CD8-positive, alpha-beta T cell (primary cell): ENCODE measurements at regions of chr3 and their contacts with region 1.

Region 1: GRCh38 chr3:57397175-57398026 is 104.9 kb upstream of the ASB14 start:
- DNase-seq: peak; percentile 16 to 76 (median 53)
- ATAC-seq: peak; percentile 98
- H3K4me3 ChIP-seq: peak overlapping the region in 1 of 2 experiments; percentile 6
- H3K4me3 Mint-ChIP-seq: peak overlapping the region; percentile 50
- H3K27ac ChIP-seq: no peak overlapping the region
- H3K27ac Mint-ChIP-seq: peak overlapping the region; percentile 38
- H3K4me1 ChIP-seq: peaks cover 8% of the 10 kb centered on the region
- H3K4me1 Mint-ChIP-seq: peaks cover 15% of the 10 kb centered on the region
- H3K27me3 ChIP-seq: no peaks in the 10 kb centered on the region
- H3K27me3 Mint-ChIP-seq: peaks cover 3% of the 10 kb centered on the region
- CTCF ChIP-seq: peak; percentile 87

Region 2: GRCh38 chr3:57409456-57409855 is 12.1 kb after region 1 on chr3:
- CTCF ChIA-PET with region 1: interaction called, 12 read pairs
- POLR2A ChIA-PET with region 1: no interaction called
- intact Hi-C with region 1: no loop called
- DNase-seq: no peak
- ATAC-seq: no peak
- H3K4me3 ChIP-seq: no peak overlapping the region
- H3K4me3 Mint-ChIP-seq: no peak overlapping the region
- H3K27ac ChIP-seq: no peak overlapping the region
- H3K27ac Mint-ChIP-seq: no peak overlapping the region
- H3K4me1 ChIP-seq: no peaks in the 10 kb centered on the region
- H3K4me1 Mint-ChIP-seq: no peaks in the 10 kb centered on the region
- H3K27me3 ChIP-seq: no peaks in the 10 kb centered on the region
- H3K27me3 Mint-ChIP-seq: no peaks in the 10 kb centered on the region
- CTCF ChIP-seq: no peak

Region 3: DNA sequence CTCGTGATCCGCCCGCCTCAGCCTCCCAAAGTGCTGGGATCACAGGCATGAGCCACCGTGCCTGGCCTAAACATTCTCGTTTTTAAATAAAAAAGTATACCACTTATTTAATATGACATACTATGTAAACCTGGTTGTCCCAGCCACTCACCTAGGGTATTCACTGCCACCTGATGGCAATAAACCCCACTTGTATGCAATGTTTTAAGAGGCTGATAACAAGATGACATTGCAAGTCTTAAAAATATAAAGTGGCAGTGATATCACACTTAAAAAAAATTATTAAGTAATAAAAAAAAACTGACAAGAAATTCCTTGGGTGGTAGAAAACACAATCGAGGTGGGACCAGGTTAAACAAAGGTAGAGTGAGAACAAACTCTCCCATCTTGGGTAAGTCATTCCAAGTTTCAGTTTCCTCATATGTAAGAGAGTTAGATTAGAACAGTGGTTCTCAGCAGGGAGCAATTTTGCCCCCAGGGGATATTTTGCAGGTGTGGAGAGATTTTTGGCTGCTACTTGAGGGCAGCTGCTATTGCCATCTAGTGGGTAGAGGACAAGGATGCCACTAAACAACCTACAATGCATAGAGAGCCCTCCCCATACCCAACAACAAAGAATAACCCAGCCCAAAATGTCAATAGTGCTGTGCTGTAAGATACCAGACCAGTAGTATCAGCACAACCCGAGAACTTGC is 185.2 kb after region 1 on chr3:
- CTCF ChIA-PET with region 1: no interaction called
- POLR2A ChIA-PET with region 1: no interaction called
- intact Hi-C with region 1: loop called in 1 of 2 experiments (anchors 10 kb)
- DNase-seq: peak in 2 of 9 experiments; percentile 24 to 34
- ATAC-seq: peak; percentile 62
- H3K4me3 ChIP-seq: no peak overlapping the region
- H3K4me3 Mint-ChIP-seq: no peak overlapping the region
- H3K27ac ChIP-seq: no peak overlapping the region
- H3K27ac Mint-ChIP-seq: no peak overlapping the region
- H3K4me1 ChIP-seq: no peaks in the 10 kb centered on the region
- H3K4me1 Mint-ChIP-seq: peaks cover 28% of the 10 kb centered on the region
- H3K27me3 ChIP-seq: no peaks in the 10 kb centered on the region
- H3K27me3 Mint-ChIP-seq: no peaks in the 10 kb centered on the region
- CTCF ChIP-seq: no peak

Region 4: DNA sequence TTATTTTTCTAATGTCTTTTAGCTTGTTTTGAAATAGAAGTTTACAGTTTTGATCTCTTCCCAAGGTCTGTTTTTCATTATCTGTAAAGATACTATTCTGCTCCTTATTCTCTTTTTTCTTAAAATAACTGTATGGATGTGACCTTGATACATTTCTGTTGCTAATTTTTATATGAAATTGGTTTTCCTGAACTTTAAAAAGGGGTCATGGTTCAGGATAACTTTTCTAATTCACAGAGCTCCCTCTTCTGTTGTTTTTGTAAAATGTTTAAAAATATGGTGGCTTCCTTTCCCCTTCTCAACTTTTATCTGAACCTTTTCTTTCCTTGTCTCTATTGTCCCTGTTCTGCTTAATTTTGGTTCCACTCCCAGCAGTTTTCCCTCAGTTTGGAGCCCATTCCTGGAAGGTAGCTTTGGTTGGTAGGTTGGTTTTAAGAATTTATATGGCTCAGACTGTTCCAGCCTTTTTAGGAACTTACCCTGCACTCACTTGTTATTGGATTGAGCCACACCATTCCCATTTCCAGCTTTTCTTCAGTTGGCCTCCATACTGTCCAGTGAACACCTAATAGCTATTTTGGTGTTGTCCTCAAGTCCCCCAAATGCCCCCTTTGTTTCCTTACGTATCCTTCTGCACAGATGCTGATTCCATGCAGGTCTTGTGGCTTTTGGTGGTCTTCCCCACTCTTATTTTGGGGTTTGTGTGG is 429.0 kb after region 1 on chr3:
- CTCF ChIA-PET with region 1: interaction called, 10 read pairs
- POLR2A ChIA-PET with region 1: no interaction called
- intact Hi-C with region 1: loop called in 1 of 2 experiments (anchors 2 kb)
- DNase-seq: no peak
- ATAC-seq: no peak
- H3K4me3 ChIP-seq: no peak overlapping the region
- H3K4me3 Mint-ChIP-seq: no peak overlapping the region
- H3K27ac ChIP-seq: no peak overlapping the region
- H3K27ac Mint-ChIP-seq: no peak overlapping the region
- H3K4me1 ChIP-seq: no peaks in the 10 kb centered on the region
- H3K4me1 Mint-ChIP-seq: peaks cover 24% of the 10 kb centered on the region
- H3K27me3 ChIP-seq: no peaks in the 10 kb centered on the region
- H3K27me3 Mint-ChIP-seq: no peaks in the 10 kb centered on the region
- CTCF ChIP-seq: no peak

Region 5: GRCh38 chr3:57910988-57911387 is 513.6 kb after region 1 on chr3:
- CTCF ChIA-PET with region 1: interaction called, 8 read pairs
- POLR2A ChIA-PET with region 1: no interaction called
- intact Hi-C with region 1: loop called (anchors 1 to 2 kb)
- DNase-seq: peak in 6 of 9 experiments; percentile 3 to 53 (median 26)
- ATAC-seq: no peak
- H3K4me3 ChIP-seq: no peak overlapping the region
- H3K4me3 Mint-ChIP-seq: no peak overlapping the region
- H3K27ac ChIP-seq: no peak overlapping the region
- H3K27ac Mint-ChIP-seq: no peak overlapping the region
- H3K4me1 ChIP-seq: no peaks in the 10 kb centered on the region
- H3K4me1 Mint-ChIP-seq: no peaks in the 10 kb centered on the region
- H3K27me3 ChIP-seq: no peaks in the 10 kb centered on the region
- H3K27me3 Mint-ChIP-seq: no peaks in the 10 kb centered on the region
- CTCF ChIP-seq: no peak

Region 6: GRCh38 chr3:58206406-58207011 is 809.1 kb after region 1 on chr3:
- CTCF ChIA-PET with region 1: no interaction called
- POLR2A ChIA-PET with region 1: no interaction called
- intact Hi-C with region 1: no loop called
- DNase-seq: peak in 2 of 9 experiments; percentile 12 to 31
- ATAC-seq: peak; percentile 58
- H3K4me3 ChIP-seq: no peak overlapping the region
- H3K4me3 Mint-ChIP-seq: no peak overlapping the region
- H3K27ac ChIP-seq: no peak overlapping the region
- H3K27ac Mint-ChIP-seq: no peak overlapping the region
- H3K4me1 ChIP-seq: no peaks in the 10 kb centered on the region
- H3K4me1 Mint-ChIP-seq: no peaks in the 10 kb centered on the region
- H3K27me3 ChIP-seq: no peaks in the 10 kb centered on the region
- H3K27me3 Mint-ChIP-seq: peaks cover 14% of the 10 kb centered on the region
- CTCF ChIP-seq: no peak

Region 7: DNA sequence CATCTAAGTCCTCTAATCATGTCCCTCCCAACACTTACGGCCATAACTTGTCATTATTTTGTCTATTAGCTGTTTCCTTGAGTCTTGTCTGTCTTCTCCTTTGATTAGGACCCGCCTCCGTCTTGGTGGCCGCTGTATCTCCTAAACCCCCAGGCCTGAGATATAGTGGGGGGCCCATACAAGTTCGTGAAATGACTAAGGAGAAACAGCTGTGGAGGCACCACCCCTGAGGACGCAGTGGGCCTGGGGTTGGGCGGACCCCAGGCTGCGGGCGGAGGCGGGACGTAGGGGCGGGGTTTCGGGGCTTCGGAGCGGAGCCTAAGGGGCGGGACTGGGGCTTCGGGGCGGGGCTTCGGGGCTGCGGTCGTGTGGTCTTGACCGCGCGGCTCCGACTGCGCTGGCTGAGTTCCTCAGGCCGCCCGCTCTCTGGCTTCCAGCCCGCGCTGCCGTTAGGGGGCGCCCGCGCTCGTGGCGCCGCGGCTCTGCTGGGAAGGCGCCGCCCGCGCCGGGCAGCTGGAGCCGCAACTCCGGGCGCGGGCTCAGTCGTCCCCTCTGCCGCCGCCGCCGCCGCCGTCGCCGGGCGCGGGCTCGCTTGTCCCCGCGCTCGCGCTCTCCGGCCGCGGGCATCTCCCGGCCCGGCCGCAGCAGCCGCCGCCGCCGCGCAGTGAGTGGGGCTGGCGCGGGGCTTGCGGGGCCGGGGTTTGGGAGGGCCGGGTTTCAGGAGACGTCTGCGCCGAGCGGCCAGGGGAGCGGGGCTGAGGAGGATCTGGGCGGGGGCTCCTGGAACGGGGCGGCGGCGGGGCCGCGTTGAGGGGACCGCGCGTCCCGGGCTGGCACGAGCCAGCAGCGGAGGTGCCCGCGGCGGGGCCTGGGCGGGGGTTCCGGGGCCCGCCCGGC is 1094.4 kb after region 1 on chr3 and contains the start of gene KCTD6:
- CTCF ChIA-PET with region 1: no interaction called
- POLR2A ChIA-PET with region 1: no interaction called
- intact Hi-C with region 1: no loop called
- DNase-seq: peak; percentile 74 to 93 (median 85)
- ATAC-seq: peak; percentile 81
- H3K4me3 ChIP-seq: peak within 1 kb of the TSS; percentile 72 to 88
- H3K4me3 Mint-ChIP-seq: peak within 1 kb of the TSS; percentile 93
- H3K27ac ChIP-seq: peak within 1 kb of the TSS; percentile 50 to 54
- H3K27ac Mint-ChIP-seq: peak within 1 kb of the TSS; percentile 91
- H3K4me1 ChIP-seq: peaks cover 45% of the 10 kb centered on the region
- H3K4me1 Mint-ChIP-seq: peaks cover 54% of the 10 kb centered on the region
- H3K27me3 ChIP-seq: no peaks in the 10 kb centered on the region
- H3K27me3 Mint-ChIP-seq: no peaks in the 10 kb centered on the region
- CTCF ChIP-seq: peak; percentile 33
- total RNA-seq, gene KCTD6: 4.2 to 4.5 TPM

Region 8: GRCh38 chr3:58591517-58592510 is 1194.4 kb after region 1 on chr3:
- CTCF ChIA-PET with region 1: no interaction called
- POLR2A ChIA-PET with region 1: no interaction called
- intact Hi-C with region 1: no loop called
- DNase-seq: no peak
- ATAC-seq: no peak
- H3K4me3 ChIP-seq: no peak overlapping the region
- H3K4me3 Mint-ChIP-seq: no peak overlapping the region
- H3K27ac ChIP-seq: no peak overlapping the region
- H3K27ac Mint-ChIP-seq: no peak overlapping the region
- H3K4me1 ChIP-seq: no peaks in the 10 kb centered on the region
- H3K4me1 Mint-ChIP-seq: no peaks in the 10 kb centered on the region
- H3K27me3 ChIP-seq: peaks cover 2 to 5% of the 10 kb centered on the region in 2 experiments
- H3K27me3 Mint-ChIP-seq: peaks cover 24% of the 10 kb centered on the region
- CTCF ChIP-seq: no peak